ENCODE measurements at regions of chr11 and their contacts with region 1.

Region 1: GRCh38 chr11:14300661-14301304 is 58.2 kb downstream of the RRAS2 start:
- DNase-seq: peak in 1 of 2 experiments; percentile 23
- H3K4me3 ChIP-seq: no peak overlapping the region
- H3K27ac ChIP-seq: no peak overlapping the region
- H3K4me1 ChIP-seq: peaks cover 0 to 27% (median 5%) of the 10 kb centered on the region in 4 experiments; a peak in 5 of 7 replicates
- H3K27me3 ChIP-seq: no peaks in the 10 kb centered on the region
- CTCF ChIP-seq: peak; percentile 35 to 91 (median 88)
- EP300 ChIP-seq: no peak
- POLR2A ChIP-seq: no peak
- RAD21 ChIP-seq: peak; percentile 94 to 96

Region 2: DNA sequence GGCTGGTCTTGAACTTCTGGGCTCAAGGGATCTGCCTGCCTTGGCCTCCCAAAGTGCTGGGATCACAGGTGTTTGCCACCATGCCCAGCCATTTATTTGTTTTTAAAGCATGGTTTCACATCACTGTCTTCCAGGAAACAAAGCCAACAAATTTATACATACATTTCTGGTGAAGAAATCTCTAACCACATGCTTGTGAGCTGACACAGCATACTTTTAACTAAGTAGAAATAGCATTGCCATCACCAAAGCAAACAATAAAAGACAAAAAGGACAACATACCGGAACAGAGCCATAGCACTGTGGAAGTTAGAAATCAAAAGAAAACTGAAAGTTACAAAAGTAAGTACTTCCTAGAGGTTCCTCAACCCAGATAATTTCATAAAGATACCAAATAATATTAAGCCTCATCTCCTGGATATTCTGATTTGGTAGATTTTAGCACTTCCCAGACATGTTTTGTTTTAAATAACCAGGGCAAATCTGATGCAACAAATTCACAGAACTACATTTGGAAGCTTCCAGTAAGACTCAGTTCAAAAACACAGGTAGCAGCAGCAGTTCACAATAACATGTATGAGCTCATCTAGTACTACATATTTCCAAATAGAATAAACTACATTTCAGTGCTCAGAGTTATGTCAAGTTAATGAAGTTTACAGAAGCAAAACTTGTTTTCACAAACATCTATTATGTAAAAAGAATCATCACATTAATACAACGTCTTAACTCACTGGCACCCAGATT is 12.4 kb before region 1 on chr11:
- CTCF ChIA-PET with region 1: interaction called, 41 read pairs
- POLR2A ChIA-PET with region 1: interaction called, 5 read pairs
- DNase-seq: no peak
- H3K4me3 ChIP-seq: no peak overlapping the region
- H3K27ac ChIP-seq: no peak overlapping the region
- H3K4me1 ChIP-seq: no peaks in the 10 kb centered on the region
- H3K27me3 ChIP-seq: no peaks in the 10 kb centered on the region
- CTCF ChIP-seq: no peak
- EP300 ChIP-seq: no peak
- POLR2A ChIP-seq: no peak
- RAD21 ChIP-seq: no peak

Region 3: DNA sequence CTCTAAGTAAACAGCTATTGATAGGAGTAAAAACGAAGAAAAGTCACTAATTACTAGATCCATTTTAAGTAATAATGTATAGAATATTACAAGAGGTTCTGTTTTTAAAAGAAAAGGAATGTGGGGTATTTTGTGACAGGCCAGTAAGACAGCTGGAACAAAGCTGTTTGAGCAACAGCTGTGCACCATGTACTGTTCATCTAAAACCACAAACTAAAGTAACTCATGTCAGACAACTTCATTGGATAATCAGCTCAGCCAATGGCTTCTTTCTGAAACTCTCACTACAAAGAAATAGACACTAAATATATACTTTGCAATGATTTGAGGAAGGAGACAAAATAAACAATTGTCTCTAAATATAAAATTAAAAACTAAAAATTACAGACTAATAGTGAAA is 42.1 kb after region 1 on chr11:
- CTCF ChIA-PET with region 1: interaction called, 49 read pairs
- POLR2A ChIA-PET with region 1: interaction called, 6 read pairs
- DNase-seq: no peak
- H3K4me3 ChIP-seq: peak overlapping the region in 1 of 4 experiments; percentile 64; a peak in 1 of 8 replicates
- H3K27ac ChIP-seq: no peak overlapping the region
- H3K4me1 ChIP-seq: peaks cover 0 to 29% (median 7%) of the 10 kb centered on the region in 4 experiments; a peak in 5 of 7 replicates
- H3K27me3 ChIP-seq: no peaks in the 10 kb centered on the region
- CTCF ChIP-seq: no peak
- EP300 ChIP-seq: no peak
- POLR2A ChIP-seq: no peak
- RAD21 ChIP-seq: no peak

Region 4: GRCh38 chr11:14364322-14364721 is 63.5 kb after region 1 on chr11:
- CTCF ChIA-PET with region 1: interaction called, 11 read pairs
- POLR2A ChIA-PET with region 1: interaction called, 3 read pairs
- DNase-seq: no peak
- H3K4me3 ChIP-seq: no peak overlapping the region
- H3K27ac ChIP-seq: no peak overlapping the region
- H3K4me1 ChIP-seq: peaks cover 0 to 5% (median under 1%) of the 10 kb centered on the region in 4 experiments; a peak in 5 of 7 replicates
- H3K27me3 ChIP-seq: no peaks in the 10 kb centered on the region
- CTCF ChIP-seq: no peak
- EP300 ChIP-seq: no peak
- POLR2A ChIP-seq: no peak
- RAD21 ChIP-seq: no peak

Region 5: DNA sequence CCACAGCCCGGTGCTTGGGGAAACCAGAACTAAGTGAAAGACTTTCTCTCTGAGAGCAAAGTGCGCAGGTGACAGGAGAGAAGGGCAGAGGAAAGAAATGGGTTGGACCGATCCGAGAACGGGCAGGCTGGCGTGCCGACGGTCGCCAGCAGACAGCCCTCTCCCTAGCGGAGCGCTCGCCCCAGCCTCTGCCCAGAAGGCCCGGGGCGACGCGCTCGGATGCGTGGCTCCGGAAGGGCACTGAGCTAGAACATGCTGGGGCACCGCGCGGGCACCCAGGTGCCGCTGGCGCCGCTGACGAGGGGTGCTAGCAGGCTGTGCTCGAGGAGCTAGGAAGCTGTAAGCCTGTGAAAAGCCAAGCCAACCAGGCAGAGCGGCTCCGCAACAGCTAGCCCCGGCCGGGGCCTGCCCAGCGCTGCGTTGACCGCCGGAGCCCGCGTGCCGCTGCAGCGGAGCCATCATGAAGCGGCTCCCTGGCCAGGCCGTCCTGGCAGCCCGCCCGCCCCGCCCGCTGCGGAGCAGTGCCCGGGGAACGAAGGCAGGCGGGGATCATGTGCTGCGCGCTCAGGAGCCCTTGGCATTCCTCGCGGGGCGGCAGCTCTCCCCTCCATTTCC is 80.3 kb after region 1 on chr11:
- CTCF ChIA-PET with region 1: interaction called, 13 read pairs
- POLR2A ChIA-PET with region 1: interaction called, 3 read pairs
- DNase-seq: peak in 1 of 2 experiments; percentile 81
- H3K4me3 ChIP-seq: peak overlapping the region; percentile 35 to 63 (median 56)
- H3K27ac ChIP-seq: no peak overlapping the region
- H3K4me1 ChIP-seq: peaks cover 0 to 3% (median 0%) of the 10 kb centered on the region in 4 experiments; a peak in 1 of 7 replicates
- H3K27me3 ChIP-seq: peaks cover 0 to 16% (median 3%) of the 10 kb centered on the region in 4 experiments; a peak in 5 of 7 replicates
- CTCF ChIP-seq: no peak
- EP300 ChIP-seq: no peak
- POLR2A ChIP-seq: no peak
- RAD21 ChIP-seq: no peak

Region 6: GRCh38 chr11:14422052-14422813 is 121.5 kb after region 1 on chr11:
- CTCF ChIA-PET with region 1: interaction called, 312 read pairs
- POLR2A ChIA-PET with region 1: interaction called, 8 read pairs
- DNase-seq: peak; percentile 67 to 90
- H3K4me3 ChIP-seq: peak overlapping the region in 2 of 4 experiments; percentile 10 to 37; a peak in 4 of 8 replicates
- H3K27ac ChIP-seq: no peak overlapping the region
- H3K4me1 ChIP-seq: peaks cover 7 to 12% (median 9%) of the 10 kb centered on the region in 4 experiments
- H3K27me3 ChIP-seq: no peaks in the 10 kb centered on the region
- CTCF ChIP-seq: no peak
- EP300 ChIP-seq: no peak
- POLR2A ChIP-seq: no peak
- RAD21 ChIP-seq: 0 out of 4 replicates have a peak, but pooled peaks of 1 of the 2 experiments have one; percentile 7

Measured in H1 (cell line).